ENCODE measurements at regions of chr7 and their contacts with region 1.

Region 1: GRCh38 chr7:131486346-131486745 is 70.1 kb downstream of the PODXL start:
- DNase-seq: no peak

Region 2: GRCh38 chr7:131471605-131472004 is 14.7 kb before region 1 on chr7:
- CTCF ChIA-PET with region 1: no interaction called
- POLR2A ChIA-PET with region 1: no interaction called
- DNase-seq: no peak

Region 3: DNA sequence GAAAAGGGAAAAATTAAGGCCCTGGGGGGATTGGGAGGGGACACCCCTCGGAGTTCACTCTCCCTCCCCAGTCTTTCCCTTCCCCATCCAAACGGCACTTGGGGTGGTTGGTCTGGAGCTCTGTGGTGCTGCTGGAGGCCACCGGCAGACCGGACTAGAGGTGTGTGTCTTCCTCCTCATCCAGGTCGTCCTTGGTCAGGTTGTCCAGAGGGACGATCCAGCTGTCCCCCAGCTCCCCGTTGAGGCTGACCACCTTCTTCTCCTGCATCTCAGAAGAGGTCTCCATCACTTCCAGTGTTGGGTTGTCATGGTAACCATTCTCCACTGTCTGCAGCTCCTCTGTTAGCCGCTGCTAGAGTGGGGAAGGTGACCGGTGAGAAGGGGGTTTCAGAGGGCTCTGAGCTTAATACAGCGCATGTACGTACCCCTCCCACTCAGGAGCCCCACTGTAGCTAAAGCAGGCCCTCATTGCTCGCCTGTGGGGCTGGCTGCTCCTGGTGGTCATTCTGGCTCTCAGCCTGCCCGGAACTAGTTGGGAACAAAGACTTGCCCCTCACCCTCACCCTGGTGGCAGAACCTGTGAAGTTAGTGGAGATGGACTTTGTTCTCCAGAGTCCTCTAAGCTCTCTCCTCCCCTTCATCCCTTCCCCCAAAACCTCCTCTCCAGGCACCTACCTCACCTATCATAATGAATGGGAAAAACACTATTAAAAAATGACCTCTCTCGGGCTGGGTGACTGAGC is 18.0 kb after region 1 on chr7:
- CTCF ChIA-PET with region 1: interaction called, 11 read pairs
- POLR2A ChIA-PET with region 1: no interaction called
- DNase-seq: no peak

Measured in HEK293T (cell line).